OCI-LY7 (cell line): ENCODE measurements at regions of chr3 and their contacts with region 1.

Region 1: DNA sequence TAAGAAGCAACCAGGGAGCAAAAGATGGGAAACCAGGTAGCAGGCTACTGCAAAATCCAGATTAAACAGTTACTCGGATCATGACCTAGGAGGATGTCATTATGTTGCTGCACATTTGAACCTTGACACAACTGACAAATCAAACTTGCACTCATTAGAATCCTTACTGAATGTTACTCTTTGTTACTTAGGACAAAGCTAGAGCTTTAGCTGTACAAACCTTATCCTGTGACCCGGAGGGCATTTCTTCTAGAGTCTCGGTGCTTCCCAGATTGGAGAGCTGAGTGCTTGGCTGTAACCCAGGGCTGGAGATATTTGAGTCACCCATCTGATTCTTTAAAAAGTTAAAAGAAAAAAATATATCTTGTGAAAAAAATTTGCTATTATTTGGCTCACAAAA is 43.4 kb downstream of the DCP1A start:
- DNase-seq: no peak
- H3K4me3 ChIP-seq: no peak overlapping the region
- H3K27ac ChIP-seq: no peak overlapping the region
- H3K4me1 ChIP-seq: no peaks in the 10 kb centered on the region
- CTCF ChIP-seq: no peak

Region 2: GRCh38 chr3:53709860-53710674 is 406.1 kb after region 1 on chr3:
- CTCF ChIA-PET with region 1: no interaction called
- POLR2A ChIA-PET with region 1: no interaction called
- intact Hi-C with region 1: loop called (anchors 2 kb)
- DNase-seq: peak; percentile 59
- H3K4me3 ChIP-seq: no peak overlapping the region
- H3K27ac ChIP-seq: no peak overlapping the region
- H3K4me1 ChIP-seq: no peaks in the 10 kb centered on the region
- CTCF ChIP-seq: peak; percentile 85

Region 3: GRCh38 chr3:53721187-53722119 is 417.5 kb after region 1 on chr3:
- CTCF ChIA-PET with region 1: no interaction called
- POLR2A ChIA-PET with region 1: no interaction called
- intact Hi-C with region 1: no loop called
- DNase-seq: no peak
- H3K4me3 ChIP-seq: no peak overlapping the region
- H3K27ac ChIP-seq: no peak overlapping the region
- H3K4me1 ChIP-seq: no peaks in the 10 kb centered on the region
- CTCF ChIP-seq: no peak

Region 4: DNA sequence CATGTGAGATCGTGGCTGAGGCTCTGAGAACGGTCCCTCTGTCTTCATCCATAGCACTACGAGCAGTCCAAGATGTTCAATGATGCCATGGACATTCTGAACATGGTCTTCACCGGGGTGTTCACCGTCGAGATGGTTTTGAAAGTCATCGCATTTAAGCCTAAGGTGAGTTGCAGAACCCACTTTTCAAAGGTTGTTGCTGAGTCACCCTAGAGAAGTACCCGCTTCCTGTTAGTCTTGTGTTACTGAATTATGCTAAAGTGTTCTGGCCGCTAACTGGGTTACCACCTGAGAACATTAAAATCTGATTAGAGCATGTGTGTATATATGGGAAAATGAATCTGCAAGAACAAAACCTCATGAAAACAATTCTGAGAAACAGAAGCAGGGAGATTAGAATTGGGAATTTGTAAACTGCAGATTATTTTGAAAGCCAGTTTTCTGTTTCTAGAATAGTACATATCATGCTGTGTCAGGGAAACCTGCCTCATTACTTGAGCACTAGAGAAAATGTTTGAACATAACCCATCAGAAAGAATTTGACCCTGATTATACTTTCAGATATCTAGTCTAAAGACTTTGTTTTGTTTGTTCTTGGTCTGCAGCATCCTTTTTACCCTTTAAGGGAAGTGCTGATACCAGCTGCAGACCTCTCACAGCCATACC is 449.7 kb after region 1 on chr3:
- CTCF ChIA-PET with region 1: no interaction called
- POLR2A ChIA-PET with region 1: no interaction called
- intact Hi-C with region 1: no loop called
- DNase-seq: peak; percentile 18
- H3K4me3 ChIP-seq: no peak overlapping the region
- H3K27ac ChIP-seq: no peak overlapping the region
- H3K4me1 ChIP-seq: peaks cover 23% of the 10 kb centered on the region
- CTCF ChIP-seq: no peak